A673 (cell line): ENCODE measurements at regions of chr1 and their contacts with region 1.

Region 1: GRCh38 chr1:52801011-52801410 is 41.5 kb upstream of the ZYG11A start:
- DNase-seq: no peak
- H3K4me3 ChIP-seq: no peak overlapping the region
- H3K27ac ChIP-seq: no peak overlapping the region
- H3K4me1 ChIP-seq: no peaks in the 10 kb centered on the region
- H3K27me3 ChIP-seq: no peaks in the 10 kb centered on the region
- CTCF ChIP-seq: no peak

Region 2: DNA sequence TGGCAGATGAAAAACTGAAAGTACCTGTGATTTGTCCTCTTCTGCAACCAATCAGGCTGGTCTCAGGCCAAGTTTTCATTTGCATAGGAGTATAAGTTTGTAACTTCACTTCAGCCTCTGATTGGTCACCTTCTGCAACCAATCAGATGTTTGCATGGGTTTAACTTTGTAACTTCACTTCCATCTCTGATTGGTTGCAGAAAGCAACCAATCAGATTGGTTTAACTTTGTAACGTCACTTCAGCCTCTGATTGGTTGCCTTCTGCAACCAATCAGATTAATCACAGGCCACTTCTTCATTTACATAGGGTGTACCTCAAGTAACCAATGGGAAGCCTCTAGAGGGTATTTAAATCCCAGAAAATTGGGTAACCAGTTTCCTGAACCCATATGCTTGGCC is 229.2 kb before region 1 on chr1:
- CTCF ChIA-PET with region 1: no interaction called
- POLR2A ChIA-PET with region 1: no interaction called
- intact Hi-C with region 1: no loop called
- DNase-seq: peak; percentile 36
- H3K4me3 ChIP-seq: no peak overlapping the region
- H3K27ac ChIP-seq: no peak overlapping the region
- H3K4me1 ChIP-seq: peaks cover 8% of the 10 kb centered on the region
- H3K27me3 ChIP-seq: no peaks in the 10 kb centered on the region
- CTCF ChIP-seq: no peak

Region 3: DNA sequence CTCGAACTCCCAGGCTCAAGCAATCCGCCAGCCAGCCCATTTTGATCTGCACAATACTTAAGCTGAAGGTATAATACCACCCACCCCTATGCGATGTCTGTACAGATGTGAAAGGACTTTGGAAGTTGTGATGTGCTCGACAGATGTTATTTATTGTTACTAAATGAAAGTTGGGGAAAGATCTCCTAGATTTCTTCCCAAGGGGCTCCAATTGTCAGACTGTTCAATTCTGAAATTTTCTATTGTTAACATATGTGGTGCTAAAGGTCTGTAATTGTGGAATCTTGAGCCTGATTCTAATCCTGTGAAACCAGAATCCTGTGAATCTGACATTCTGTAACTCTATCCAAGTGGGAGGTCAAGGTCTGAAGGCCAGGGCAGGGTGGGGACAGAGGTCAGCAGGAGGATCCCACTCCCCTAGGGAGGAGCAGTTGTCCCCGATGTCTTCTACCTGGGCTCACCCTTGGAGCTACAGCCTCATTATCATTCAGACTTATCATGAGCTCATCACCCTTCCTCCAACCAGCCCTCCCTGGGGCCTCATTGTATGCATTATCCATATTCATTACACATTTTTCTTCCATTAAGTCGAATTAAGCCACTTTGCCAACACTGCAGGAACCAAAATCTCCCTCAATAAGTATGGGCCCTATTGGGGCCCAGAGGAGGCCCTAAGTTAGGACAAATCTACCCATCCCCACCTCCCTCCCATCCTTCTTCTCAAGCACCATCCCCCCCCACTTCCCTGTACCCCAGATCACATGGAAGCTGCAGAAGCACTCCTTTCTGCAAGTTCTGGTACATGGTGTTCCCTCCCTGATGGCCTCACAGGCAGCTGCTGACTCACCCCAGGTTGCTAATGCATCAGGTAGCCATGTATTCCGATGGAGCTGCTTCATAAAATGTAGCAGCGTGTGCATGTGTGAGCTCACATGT is 135.7 kb before region 1 on chr1:
- CTCF ChIA-PET with region 1: no interaction called
- POLR2A ChIA-PET with region 1: no interaction called
- intact Hi-C with region 1: no loop called
- DNase-seq: peak; percentile 83
- H3K4me3 ChIP-seq: no peak overlapping the region
- H3K27ac ChIP-seq: no peak overlapping the region
- H3K4me1 ChIP-seq: peaks cover 24% of the 10 kb centered on the region
- H3K27me3 ChIP-seq: no peaks in the 10 kb centered on the region
- CTCF ChIP-seq: no peak

Region 4: DNA sequence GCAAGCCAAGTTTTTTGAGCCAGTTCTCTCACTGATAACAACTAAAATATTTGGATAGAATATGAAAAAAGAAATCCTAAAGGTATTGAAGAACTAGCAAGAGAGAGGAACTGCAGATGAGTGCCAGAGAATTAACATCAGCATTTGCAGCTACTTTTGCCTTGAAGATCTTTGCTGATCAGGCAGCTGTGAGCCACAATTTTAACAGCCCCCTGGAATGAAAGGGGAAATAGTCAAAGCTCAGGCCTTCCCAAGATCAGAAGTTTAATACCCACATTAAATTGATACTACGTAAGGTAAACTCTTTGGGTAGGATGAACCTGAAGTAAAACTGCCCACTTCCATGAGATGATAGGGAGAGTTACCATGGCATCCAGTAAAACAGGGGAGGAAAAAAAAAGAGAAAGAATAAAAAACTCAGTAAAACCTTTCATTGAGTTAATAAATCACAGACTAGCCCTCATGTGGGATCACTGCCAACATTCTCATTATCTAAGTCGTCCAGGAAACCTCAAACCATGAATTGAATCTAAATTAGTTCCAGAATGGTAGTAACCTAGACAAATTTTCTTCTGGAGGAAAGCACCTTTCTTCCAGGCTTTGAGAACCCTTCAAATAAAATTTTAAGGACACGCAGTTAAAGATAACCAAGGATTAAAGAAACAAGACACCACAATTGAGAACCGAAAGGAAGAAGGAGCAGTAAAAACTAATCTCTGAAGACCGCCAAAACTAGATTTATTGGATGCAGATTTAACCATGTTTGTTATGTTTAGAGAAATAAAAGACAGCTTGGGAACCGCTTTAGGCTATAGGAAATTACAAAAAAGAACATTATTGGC is 154.3 kb after region 1 on chr1:
- CTCF ChIA-PET with region 1: no interaction called
- POLR2A ChIA-PET with region 1: interaction called, 12 read pairs
- intact Hi-C with region 1: no loop called
- DNase-seq: peak; percentile 94
- H3K4me3 ChIP-seq: no peak overlapping the region
- H3K27ac ChIP-seq: peak overlapping the region; percentile 71
- H3K4me1 ChIP-seq: peaks cover 19% of the 10 kb centered on the region
- H3K27me3 ChIP-seq: no peaks in the 10 kb centered on the region
- CTCF ChIP-seq: no peak